B cell (primary cell): ENCODE measurements at regions of chr12 and their contacts with region 1.

Region 1: DNA sequence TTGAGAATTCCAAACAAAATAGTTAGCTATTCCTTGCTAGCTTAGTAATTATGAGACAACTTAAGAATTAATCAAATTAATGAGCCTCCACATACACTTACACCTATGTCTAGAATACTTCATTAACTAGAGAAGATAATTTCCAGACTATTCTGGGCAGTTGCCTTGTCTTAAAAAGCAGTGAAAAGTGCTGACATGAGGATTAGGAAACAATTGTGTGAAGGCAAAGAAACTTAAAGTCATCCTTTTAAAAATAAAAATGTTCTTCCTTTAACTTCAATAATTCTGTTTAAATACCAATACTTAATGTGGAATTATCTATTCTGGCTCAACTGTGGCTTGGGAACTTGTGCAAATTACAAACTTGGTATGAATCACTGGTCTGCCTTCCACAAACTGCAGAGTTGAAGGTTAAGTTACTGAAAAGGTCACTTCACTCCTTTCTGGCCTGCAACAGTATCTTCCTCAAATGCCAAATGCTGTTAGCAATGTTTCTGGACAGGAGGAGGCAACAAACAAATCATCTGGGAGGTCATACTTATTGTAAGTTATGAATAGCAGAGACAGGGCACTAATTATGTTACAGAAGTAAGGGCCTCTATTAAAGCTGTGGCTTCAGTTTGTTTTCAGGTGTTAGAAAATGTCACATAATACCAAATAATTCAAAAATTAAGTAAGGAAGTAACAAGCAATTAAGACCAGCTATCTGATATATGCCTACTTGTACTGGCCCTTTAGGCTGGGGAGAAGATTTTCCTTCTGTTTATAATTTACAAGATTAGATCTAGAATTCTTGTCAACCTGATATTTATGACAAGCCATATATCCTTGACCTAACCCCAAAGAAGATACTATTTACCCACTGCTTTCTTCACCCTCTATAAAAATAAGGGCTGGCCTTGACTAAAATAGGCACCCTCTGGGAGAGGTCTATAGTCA is 19.1 kb downstream of the PPTC7 start:
- DNase-seq: no peak
- ATAC-seq: no peak
- H3K4me3 ChIP-seq: no peak overlapping the region
- H3K4me3 Mint-ChIP-seq: peak overlapping the region; percentile 68
- H3K27ac ChIP-seq: peak overlapping the region; percentile 75 to 82
- H3K27ac Mint-ChIP-seq: peak overlapping the region; percentile 81
- H3K4me1 ChIP-seq: peaks cover 73 to 81% of the 10 kb centered on the region in 2 donors
- H3K4me1 Mint-ChIP-seq: peaks cover 73% of the 10 kb centered on the region
- H3K27me3 ChIP-seq: no peaks in the 10 kb centered on the region
- H3K27me3 Mint-ChIP-seq: no peaks in the 10 kb centered on the region
- CTCF ChIP-seq: no peak

Region 2: GRCh38 chr12:110575326-110575725 is 11.4 kb after region 1 on chr12:
- CTCF ChIA-PET with region 1: interaction called, 13 read pairs
- POLR2A ChIA-PET with region 1: interaction called, 8 read pairs
- intact Hi-C with region 1: no loop called
- DNase-seq: no peak
- ATAC-seq: no peak
- H3K4me3 ChIP-seq: no peak overlapping the region
- H3K4me3 Mint-ChIP-seq: peak overlapping the region; percentile 45
- H3K27ac ChIP-seq: peak overlapping the region in 1 of 2 donors; percentile 46
- H3K27ac Mint-ChIP-seq: peak overlapping the region; percentile 50
- H3K4me1 ChIP-seq: peaks cover 33 to 41% of the 10 kb centered on the region in 2 donors
- H3K4me1 Mint-ChIP-seq: peaks cover 53% of the 10 kb centered on the region
- H3K27me3 ChIP-seq: no peaks in the 10 kb centered on the region
- H3K27me3 Mint-ChIP-seq: no peaks in the 10 kb centered on the region
- CTCF ChIP-seq: no peak

Region 3: DNA sequence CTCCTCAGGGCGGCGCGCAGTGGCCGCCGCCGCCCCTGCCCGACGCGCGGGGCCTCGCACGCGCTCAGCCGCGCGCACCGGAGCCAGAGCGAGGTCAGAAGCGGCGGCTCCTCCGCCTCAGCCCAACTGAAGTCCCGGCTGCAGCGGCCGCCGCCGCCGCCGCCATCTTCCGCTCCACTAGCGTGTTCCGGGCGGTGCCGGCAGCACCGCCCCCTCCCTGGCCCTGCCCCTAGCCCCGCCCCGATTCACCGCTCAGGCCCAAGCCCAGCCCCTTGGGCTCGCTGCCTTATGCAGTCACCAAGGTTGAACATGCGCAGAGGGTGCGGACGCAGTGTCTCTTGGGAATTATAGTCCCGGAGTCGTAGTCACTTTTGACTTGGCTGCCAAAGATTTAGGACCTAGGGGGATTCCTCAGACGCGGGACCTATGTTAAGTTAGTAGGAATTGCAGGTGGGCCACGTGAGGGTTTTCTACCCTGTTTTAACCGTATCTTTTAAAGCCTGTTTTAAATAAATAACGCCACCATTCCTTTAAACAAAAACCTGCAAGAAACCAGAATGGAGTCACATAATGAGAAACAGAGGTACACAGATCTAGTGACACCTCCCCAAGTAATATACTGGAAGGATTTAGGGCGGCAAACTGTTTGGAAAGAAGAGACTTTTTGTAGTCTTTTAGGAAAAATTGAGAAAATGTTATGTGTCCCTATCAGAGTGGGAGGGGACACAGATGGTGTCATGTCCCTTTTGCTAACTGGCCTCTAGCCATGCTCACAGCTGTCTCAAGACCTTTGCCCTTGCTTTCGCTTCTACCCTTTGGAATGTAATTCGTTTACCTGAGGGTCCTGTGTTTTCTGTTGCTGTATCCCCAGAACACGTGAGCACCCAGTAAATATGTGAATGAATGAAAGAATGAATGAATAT is 19.4 kb after region 1 on chr12 and contains the start of gene PPTC7:
- CTCF ChIA-PET with region 1: interaction called, 5 read pairs
- POLR2A ChIA-PET with region 1: interaction called, 8 read pairs
- intact Hi-C with region 1: loop called (anchors 1 kb)
- DNase-seq: peak; percentile 98
- ATAC-seq: peak; percentile 95
- H3K4me3 ChIP-seq: peak within 1 kb of the TSS; percentile 74 to 93 (median 87)
- H3K4me3 Mint-ChIP-seq: peak within 1 kb of the TSS; percentile 94
- H3K27ac ChIP-seq: peak within 1 kb of the TSS; percentile 88 to 96
- H3K27ac Mint-ChIP-seq: peak within 1 kb of the TSS; percentile 92
- H3K4me1 ChIP-seq: peaks cover 55 to 64% of the 10 kb centered on the region in 2 donors
- H3K4me1 Mint-ChIP-seq: peaks cover 69% of the 10 kb centered on the region
- H3K27me3 ChIP-seq: no peaks in the 10 kb centered on the region
- H3K27me3 Mint-ChIP-seq: no peaks in the 10 kb centered on the region
- CTCF ChIP-seq: no peak
- total RNA-seq, gene PPTC7: 44.9 and 45.6 TPM in 2 replicates

Region 4: GRCh38 chr12:110590806-110591326 is 26.9 kb after region 1 on chr12:
- CTCF ChIA-PET with region 1: interaction called, 4 read pairs
- POLR2A ChIA-PET with region 1: interaction called, 5 read pairs
- intact Hi-C with region 1: loop called (anchors 2 kb)
- DNase-seq: peak; percentile 92
- ATAC-seq: peak; percentile 84
- H3K4me3 ChIP-seq: peak overlapping the region in 2 of 5 experiments; percentile 25 to 40
- H3K4me3 Mint-ChIP-seq: peak overlapping the region; percentile 74
- H3K27ac ChIP-seq: peak overlapping the region; percentile 89 to 91
- H3K27ac Mint-ChIP-seq: peak overlapping the region; percentile 95
- H3K4me1 ChIP-seq: peaks cover 35 to 47% of the 10 kb centered on the region in 2 donors
- H3K4me1 Mint-ChIP-seq: peaks cover 43% of the 10 kb centered on the region
- H3K27me3 ChIP-seq: no peaks in the 10 kb centered on the region
- H3K27me3 Mint-ChIP-seq: no peaks in the 10 kb centered on the region
- CTCF ChIP-seq: no peak

Region 5: GRCh38 chr12:110647631-110648040 is 83.7 kb after region 1 on chr12:
- CTCF ChIA-PET with region 1: no interaction called
- POLR2A ChIA-PET with region 1: no interaction called
- intact Hi-C with region 1: loop called (anchors 1 kb)
- DNase-seq: peak; percentile 95
- ATAC-seq: peak; percentile 85
- H3K4me3 ChIP-seq: peak overlapping the region in 1 of 5 experiments; percentile 5
- H3K4me3 Mint-ChIP-seq: peak overlapping the region; percentile 79
- H3K27ac ChIP-seq: peak overlapping the region; percentile 90
- H3K27ac Mint-ChIP-seq: peak overlapping the region; percentile 98
- H3K4me1 ChIP-seq: peaks cover 90% of the 10 kb centered on the region in 2 donors
- H3K4me1 Mint-ChIP-seq: peaks cover 91% of the 10 kb centered on the region
- H3K27me3 ChIP-seq: no peaks in the 10 kb centered on the region
- H3K27me3 Mint-ChIP-seq: no peaks in the 10 kb centered on the region
- CTCF ChIP-seq: no peak

Region 6: DNA sequence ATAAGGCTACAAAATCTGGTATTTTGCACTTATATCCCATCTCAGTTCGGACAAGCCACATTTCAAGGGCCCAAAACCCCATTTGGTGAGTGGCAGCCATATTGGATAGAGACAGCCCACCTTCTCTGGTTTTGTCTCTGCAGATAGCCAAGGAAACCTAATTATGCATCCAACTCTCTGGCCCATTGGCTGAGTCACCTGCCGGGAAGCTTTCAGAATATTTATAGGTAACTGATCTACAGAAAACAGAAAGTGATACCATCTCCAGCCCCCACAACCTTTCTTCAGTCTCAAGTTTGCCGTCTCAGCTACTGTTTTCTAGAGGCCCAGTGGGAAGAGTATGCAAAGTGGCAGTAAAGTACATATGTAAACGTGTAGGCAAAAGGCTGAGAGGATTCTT is 212.4 kb after region 1 on chr12:
- CTCF ChIA-PET with region 1: no interaction called
- POLR2A ChIA-PET with region 1: no interaction called
- intact Hi-C with region 1: no loop called
- DNase-seq: peak; percentile 19
- ATAC-seq: peak; percentile 51
- H3K4me3 ChIP-seq: no peak overlapping the region
- H3K4me3 Mint-ChIP-seq: peak overlapping the region; percentile 36
- H3K27ac ChIP-seq: no peak overlapping the region
- H3K27ac Mint-ChIP-seq: peak overlapping the region; percentile 27
- H3K4me1 ChIP-seq: peaks cover 10 to 20% of the 10 kb centered on the region in 2 donors
- H3K4me1 Mint-ChIP-seq: peaks cover 24% of the 10 kb centered on the region
- H3K27me3 ChIP-seq: no peaks in the 10 kb centered on the region
- H3K27me3 Mint-ChIP-seq: no peaks in the 10 kb centered on the region
- CTCF ChIP-seq: no peak